ENCODE measurements at regions of chr10 and their contacts with region 1.

Region 1: DNA sequence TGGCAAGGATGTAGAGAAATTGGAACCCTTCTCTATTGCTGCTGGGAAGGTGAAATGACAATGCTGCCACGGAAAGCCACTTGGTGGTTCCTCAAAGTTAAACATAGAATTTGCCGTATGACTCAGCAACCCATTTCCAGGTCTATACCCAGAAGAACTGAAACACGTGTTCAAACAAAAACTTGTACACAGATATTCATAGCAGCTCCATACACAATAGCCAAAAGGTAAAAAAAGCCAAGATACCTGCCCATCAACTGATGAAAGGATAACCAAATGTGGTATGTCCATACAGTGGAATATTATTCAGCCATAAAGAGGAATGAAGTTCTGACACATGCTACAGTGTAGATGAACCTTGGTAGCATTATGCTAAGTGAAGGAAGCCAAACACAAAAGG is 39.1 kb downstream of the LHPP start:
- DNase-seq: no peak
- H3K4me3 ChIP-seq: no peak overlapping the region
- H3K4me3 Mint-ChIP-seq: no peak overlapping the region
- H3K27ac Mint-ChIP-seq: no peak overlapping the region
- H3K4me1 ChIP-seq: peaks cover 3% of the 10 kb centered on the region; the same call in 1 of the 2 replicates
- H3K4me1 Mint-ChIP-seq: no peaks in the 10 kb centered on the region
- H3K27me3 ChIP-seq: no peaks in the 10 kb centered on the region
- H3K27me3 Mint-ChIP-seq: no peaks in the 10 kb centered on the region
- CTCF ChIP-seq: no peak

Region 2: GRCh38 chr10:123994417-123995081 is 506.2 kb before region 1 on chr10:
- CTCF ChIA-PET with region 1: no interaction called
- POLR2A ChIA-PET with region 1: no interaction called
- intact Hi-C with region 1: loop called (anchors 5 kb)
- DNase-seq: peak; percentile 89 to 95
- H3K4me3 ChIP-seq: peak overlapping the region; percentile 5; the same call in 1 of the 2 replicates
- H3K4me3 Mint-ChIP-seq: peak overlapping the region; percentile 67
- H3K27ac Mint-ChIP-seq: no peak overlapping the region
- H3K4me1 ChIP-seq: peaks cover 9% of the 10 kb centered on the region; the same call in 1 of the 2 replicates
- H3K4me1 Mint-ChIP-seq: peaks cover 13% of the 10 kb centered on the region
- H3K27me3 ChIP-seq: no peaks in the 10 kb centered on the region
- H3K27me3 Mint-ChIP-seq: peaks cover 10% of the 10 kb centered on the region
- CTCF ChIP-seq: peak; percentile 96 to 97

Region 3: GRCh38 chr10:124403548-124403947 is 97.2 kb before region 1 on chr10:
- CTCF ChIA-PET with region 1: interaction called, 7 read pairs
- POLR2A ChIA-PET with region 1: no interaction called
- intact Hi-C with region 1: loop called (anchors 5 kb)
- DNase-seq: peak in 1 of 2 experiments; percentile 71
- H3K4me3 ChIP-seq: no peak overlapping the region
- H3K4me3 Mint-ChIP-seq: no peak overlapping the region
- H3K27ac Mint-ChIP-seq: peak overlapping the region; percentile 73
- H3K4me1 ChIP-seq: no peaks in the 10 kb centered on the region
- H3K4me1 Mint-ChIP-seq: no peaks in the 10 kb centered on the region
- H3K27me3 ChIP-seq: no peaks in the 10 kb centered on the region
- H3K27me3 Mint-ChIP-seq: no peaks in the 10 kb centered on the region
- CTCF ChIP-seq: peak; percentile 36 to 57

Region 4: DNA sequence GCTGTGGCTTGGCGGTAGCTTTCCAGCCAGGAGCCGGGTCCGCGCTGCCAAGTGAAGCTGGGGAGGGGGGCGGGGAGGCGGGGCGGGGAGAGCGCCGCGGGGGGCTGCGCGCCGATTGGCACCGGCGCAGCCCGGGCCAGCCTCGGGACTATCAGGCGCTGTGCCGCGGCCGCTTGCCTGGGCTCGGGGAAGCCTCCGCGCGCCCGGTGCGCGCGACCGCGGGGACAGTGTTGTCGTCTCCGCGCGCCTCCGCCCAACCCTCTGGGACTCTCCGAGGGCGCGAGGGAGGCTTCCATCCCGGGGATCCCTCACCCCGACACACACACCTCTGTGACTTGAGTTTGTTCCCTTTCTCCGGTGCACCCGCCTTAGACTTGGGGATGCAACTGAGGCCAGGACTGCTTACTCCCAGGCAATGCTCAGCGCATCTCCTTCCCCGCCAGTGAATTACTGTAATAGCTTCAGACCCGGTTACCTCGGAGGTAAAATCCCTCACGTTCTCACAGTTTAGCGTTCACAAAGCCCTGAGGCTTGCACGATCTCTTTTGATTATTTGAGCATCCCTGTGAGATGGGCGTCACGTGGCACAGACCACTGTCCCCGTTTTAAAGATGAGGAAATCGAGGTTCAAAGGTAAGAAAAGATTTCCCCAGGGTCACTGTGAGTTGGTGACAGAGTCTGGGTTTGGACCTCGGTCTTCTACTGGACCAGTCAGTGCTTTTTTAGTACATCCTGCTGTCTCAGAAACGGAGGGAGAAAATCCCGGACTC is 50.6 kb before region 1 on chr10 and contains the start of gene NKX1-2:
- CTCF ChIA-PET with region 1: no interaction called
- POLR2A ChIA-PET with region 1: no interaction called
- intact Hi-C with region 1: no loop called
- DNase-seq: peak in 1 of 2 experiments; percentile 36
- H3K4me3 ChIP-seq: peak within 1 kb of the TSS; percentile 41
- H3K4me3 Mint-ChIP-seq: peak within 1 kb of the TSS; percentile 75
- H3K27ac Mint-ChIP-seq: no peak within 1 kb of the TSS
- H3K4me1 ChIP-seq: peaks cover 17% of the 10 kb centered on the region
- H3K4me1 Mint-ChIP-seq: no peaks in the 10 kb centered on the region
- H3K27me3 ChIP-seq: peaks cover 2% of the 10 kb centered on the region
- H3K27me3 Mint-ChIP-seq: peaks cover 19% of the 10 kb centered on the region
- CTCF ChIP-seq: no peak
- total RNA-seq, gene NKX1-2: 2.0 and 2.8 TPM in 2 replicates

Measured in Caco-2 (cell line).